Endothelial cell of umbilical vein (primary cell): ENCODE measurements at regions of chr11 and their contacts with region 1.

Region 1: DNA sequence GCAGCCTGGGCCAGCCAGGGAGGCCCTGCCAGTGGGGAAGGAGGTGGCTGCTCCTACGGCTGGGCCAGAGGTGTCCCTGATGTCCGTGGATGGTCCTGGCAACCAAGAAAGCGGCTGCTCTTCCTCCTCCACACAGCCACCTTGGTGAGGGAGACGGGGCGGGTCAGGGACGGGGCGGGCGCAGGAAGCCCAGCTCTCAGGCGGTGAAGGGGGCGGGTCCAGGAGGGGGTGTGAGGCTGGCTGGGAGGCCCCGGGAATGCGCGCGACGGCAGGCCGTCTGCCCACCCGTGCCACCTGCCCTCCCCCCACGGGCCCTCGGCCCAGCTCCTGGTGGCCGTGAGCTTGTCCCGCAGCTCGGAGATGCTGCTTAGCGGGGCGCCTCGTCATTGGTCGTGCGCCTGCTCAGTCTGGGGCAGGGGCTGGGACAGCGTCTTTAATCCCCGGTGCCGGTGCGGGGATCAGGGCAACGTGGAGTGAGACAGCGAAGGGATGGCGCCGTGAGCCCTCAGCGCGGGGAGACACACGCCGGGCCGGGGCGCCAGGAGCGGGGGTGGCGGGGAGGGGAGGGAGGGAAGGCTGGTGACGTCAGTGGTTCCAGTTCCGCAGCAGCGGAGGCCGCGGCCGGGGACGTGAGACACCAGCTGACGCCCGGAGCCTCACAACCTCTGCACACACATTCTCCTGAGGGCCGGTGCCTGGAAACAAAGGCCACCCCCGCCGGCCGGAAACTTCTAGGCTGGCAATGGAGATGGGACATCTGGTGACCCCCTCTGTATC is 6.7 kb upstream of the BRSK2 start:
- DNase-seq: peak; percentile 41
- H3K4me3 ChIP-seq: peak overlapping the region; percentile 13 to 37 (median 33)
- H3K27ac ChIP-seq: no peak overlapping the region
- H3K4me1 ChIP-seq: no peaks in the 10 kb centered on the region
- H3K27me3 ChIP-seq: peaks cover 3 to 4% of the 10 kb centered on the region in 2 experiments
- CTCF ChIP-seq: peak in 1 of 2 donors; percentile 19
- POLR2A ChIP-seq: no peak

Region 2: DNA sequence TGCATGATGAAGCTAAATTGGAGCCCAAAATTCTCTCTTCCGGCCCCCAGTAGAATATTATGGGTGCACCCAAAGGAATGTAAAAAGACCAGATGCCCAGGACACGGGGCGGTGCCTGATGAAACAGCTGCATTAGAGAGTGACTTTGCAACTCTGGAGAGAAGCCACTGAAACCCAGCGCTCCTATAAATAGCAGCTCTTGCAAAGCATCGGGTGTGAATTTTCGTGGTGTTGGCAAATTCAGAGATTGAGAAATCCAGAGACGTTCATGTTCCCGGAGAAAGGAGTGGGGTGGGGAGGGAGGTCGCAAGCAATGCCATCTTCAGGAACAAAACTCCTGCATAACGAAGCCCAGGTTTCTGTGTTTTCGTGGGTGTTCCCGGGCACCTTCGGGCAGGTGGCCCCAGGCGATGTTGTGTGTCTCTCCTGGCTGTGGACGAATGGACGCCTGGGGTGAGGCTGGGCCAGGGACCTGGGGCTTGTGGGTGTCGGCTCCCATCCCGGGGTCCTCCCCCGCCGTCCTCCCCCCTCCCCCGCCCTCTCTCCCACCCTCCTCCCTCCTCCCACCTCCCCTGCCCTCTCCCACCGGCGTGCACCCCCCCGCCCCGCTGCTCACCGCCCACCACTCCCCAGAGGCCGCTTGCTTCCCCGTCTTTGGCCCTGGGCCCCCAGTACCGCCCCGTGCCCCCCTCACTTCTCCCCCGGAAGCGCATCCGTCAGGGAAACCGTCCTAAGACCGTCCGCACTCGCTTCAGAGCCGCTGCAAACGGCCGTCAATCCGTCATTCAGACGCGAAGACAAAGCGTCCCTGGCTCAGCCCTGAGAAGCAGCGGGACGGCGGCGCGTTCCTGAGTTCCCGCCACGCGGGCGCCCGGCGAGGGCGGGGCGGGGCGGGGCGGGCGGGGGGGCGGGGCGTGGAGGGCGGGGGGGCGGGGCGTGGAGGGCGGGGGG is 46.9 kb before region 1 on chr11:
- CTCF ChIA-PET with region 1: no interaction called
- POLR2A ChIA-PET with region 1: no interaction called
- dilution Hi-C with region 1: no loop called
- intact Hi-C with region 1: loop called (anchors 2 kb)
- DNase-seq: no peak
- H3K4me3 ChIP-seq: peak overlapping the region in 1 of 3 experiments; percentile 16
- H3K27ac ChIP-seq: no peak overlapping the region
- H3K4me1 ChIP-seq: peaks cover 6% of the 10 kb centered on the region
- H3K27me3 ChIP-seq: peaks cover 8 to 13% of the 10 kb centered on the region in 2 experiments
- CTCF ChIP-seq: no peak
- POLR2A ChIP-seq: no peak

Region 3: GRCh38 chr11:1395771-1396374 is 12.9 kb after region 1 on chr11:
- CTCF ChIA-PET with region 1: no interaction called
- POLR2A ChIA-PET with region 1: no interaction called
- dilution Hi-C with region 1: no loop called
- intact Hi-C with region 1: no loop called
- DNase-seq: no peak
- H3K4me3 ChIP-seq: no peak overlapping the region
- H3K27ac ChIP-seq: no peak overlapping the region
- H3K4me1 ChIP-seq: no peaks in the 10 kb centered on the region
- H3K27me3 ChIP-seq: peaks cover 12 to 16% of the 10 kb centered on the region in 2 experiments
- CTCF ChIP-seq: no peak
- POLR2A ChIP-seq: no peak